Mammary epithelial cell (primary cell): ENCODE measurements at regions of chr3 and their contacts with region 1.

Region 1: GRCh38 chr3:187368251-187369088 is at the start of gene RTP4:
- DNase-seq: peak; percentile 74
- H3K4me3 ChIP-seq: peak within 1 kb of the TSS in 2 of 3 experiments; percentile 21 to 22
- H3K27ac ChIP-seq: peak within 1 kb of the TSS; percentile 58
- H3K4me1 ChIP-seq: peaks cover 15% of the 10 kb centered on the region
- H3K27me3 ChIP-seq: no peaks in the 10 kb centered on the region
- CTCF ChIP-seq: no peak
- total RNA-seq, gene RTP4: 0.19 to 0.50 TPM

Region 2: GRCh38 chr3:187403768-187404270 is 35.3 kb after region 1 on chr3:
- CTCF ChIA-PET with region 1: no interaction called
- dilution Hi-C with region 1: no loop called
- in situ Hi-C with region 1: no loop called
- intact Hi-C with region 1: loop called (anchors 1 kb)
- DNase-seq: peak; percentile 99
- H3K4me3 ChIP-seq: no peak overlapping the region
- H3K27ac ChIP-seq: peak overlapping the region; percentile 76
- H3K4me1 ChIP-seq: peaks cover 11% of the 10 kb centered on the region
- H3K27me3 ChIP-seq: no peaks in the 10 kb centered on the region
- CTCF ChIP-seq: no peak

Region 3: DNA sequence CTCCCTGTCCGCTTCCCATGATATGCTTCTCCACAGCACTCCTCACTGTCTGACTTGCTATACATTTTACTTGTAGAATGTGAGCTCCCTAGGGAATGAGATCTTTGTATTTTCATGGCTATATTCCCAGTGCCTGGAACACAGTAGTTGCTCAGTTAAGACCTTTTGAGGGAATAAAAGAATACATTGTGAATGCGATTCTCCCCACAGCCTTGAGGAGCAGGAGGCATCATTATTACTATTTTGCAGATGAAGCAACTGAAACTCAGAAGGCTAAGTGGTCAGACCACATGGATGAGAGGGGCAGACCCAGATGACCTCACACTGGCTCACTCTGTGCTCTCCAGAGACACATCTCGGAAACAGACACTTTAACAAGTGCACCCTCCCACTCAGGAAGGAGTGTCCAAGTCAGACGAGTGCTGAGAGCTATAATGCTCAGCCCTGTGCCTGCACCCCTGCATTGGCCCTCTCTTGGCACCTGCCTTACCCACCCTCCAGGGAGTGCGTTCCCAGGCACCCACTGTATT is 254.9 kb after region 1 on chr3:
- CTCF ChIA-PET with region 1: no interaction called
- dilution Hi-C with region 1: no loop called
- in situ Hi-C with region 1: no loop called
- intact Hi-C with region 1: no loop called
- DNase-seq: no peak
- H3K4me3 ChIP-seq: no peak overlapping the region
- H3K27ac ChIP-seq: no peak overlapping the region
- H3K4me1 ChIP-seq: no peaks in the 10 kb centered on the region
- H3K27me3 ChIP-seq: peaks cover 3% of the 10 kb centered on the region
- CTCF ChIP-seq: no peak